Colonic mucosa (tissue), 4 donors: ENCODE measurements at regions of chr5 and their contacts with region 1.

Region 1: DNA sequence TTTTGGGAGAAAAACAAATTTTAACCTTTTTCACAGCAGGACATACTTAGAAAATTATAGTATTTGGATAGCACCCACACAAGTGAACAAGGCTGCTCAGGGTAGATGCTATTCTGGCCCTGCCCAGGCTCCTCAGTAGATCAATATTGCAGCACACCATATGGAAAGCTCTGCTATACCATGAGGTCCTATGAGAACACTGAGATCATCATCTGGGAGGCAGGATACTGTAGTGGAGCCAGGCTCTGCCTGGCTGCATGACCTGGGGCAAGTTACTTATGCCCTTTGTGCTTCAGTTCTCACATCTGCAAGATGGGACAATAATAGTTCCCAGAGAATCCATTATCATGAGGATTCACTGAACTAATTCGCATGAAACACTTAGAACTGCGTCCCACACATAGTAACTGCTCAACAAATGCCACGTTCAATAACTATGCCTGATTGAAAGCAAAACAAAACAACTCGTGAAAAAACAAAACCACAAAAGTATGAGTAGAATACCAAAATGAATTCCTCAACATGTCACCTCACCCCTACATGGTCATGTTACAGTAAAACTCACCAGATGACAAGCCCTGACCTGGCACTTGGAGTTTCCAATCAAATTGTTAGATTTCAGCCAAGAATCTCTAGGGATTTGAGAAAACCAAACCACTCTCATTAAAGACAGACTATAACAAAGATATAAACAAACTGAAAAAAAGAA is 31.9 kb downstream of the ARSB start:
- DNase-seq: no peak
- H3K4me3 ChIP-seq: no peak overlapping the region
- H3K27ac ChIP-seq: no peak overlapping the region
- H3K4me1 ChIP-seq: no peaks in the 10 kb centered on the region
- H3K27me3 ChIP-seq: no peaks in the 10 kb centered on the region
- CTCF ChIP-seq: no peak

Region 2: GRCh38 chr5:78127875-78128274 is 825.4 kb before region 1 on chr5:
- intact Hi-C with region 1: no loop called
- DNase-seq: no peak
- H3K4me3 ChIP-seq: no peak overlapping the region
- H3K27ac ChIP-seq: no peak overlapping the region
- H3K4me1 ChIP-seq: no peaks in the 10 kb centered on the region
- H3K27me3 ChIP-seq: no peaks in the 10 kb centered on the region
- CTCF ChIP-seq: no peak

Region 3: GRCh38 chr5:78467752-78468357 is 485.4 kb before region 1 on chr5:
- intact Hi-C with region 1: loop called (anchors 10 kb)
- DNase-seq: no peak
- H3K4me3 ChIP-seq: no peak overlapping the region
- H3K27ac ChIP-seq: no peak overlapping the region
- H3K4me1 ChIP-seq: no peaks in the 10 kb centered on the region
- H3K27me3 ChIP-seq: no peaks in the 10 kb centered on the region
- CTCF ChIP-seq: peak; percentile 72

Region 4: GRCh38 chr5:78649861-78650496 is 303.3 kb before region 1 on chr5:
- intact Hi-C with region 1: loop called (anchors 10 kb)
- DNase-seq: no peak
- H3K4me3 ChIP-seq: no peak overlapping the region
- H3K27ac ChIP-seq: no peak overlapping the region
- H3K4me1 ChIP-seq: peaks cover 6% of the 10 kb centered on the region
- H3K27me3 ChIP-seq: no peaks in the 10 kb centered on the region
- CTCF ChIP-seq: no peak